SK-N-SH (cell line): ENCODE measurements at regions of chr1 and their contacts with region 1.

Region 1: GRCh38 chr1:1419642-1420384 is 1.3 kb downstream of the ANKRD65 start:
- DNase-seq: peak; percentile 84
- H3K4me3 ChIP-seq: no peak overlapping the region
- H3K27ac ChIP-seq: no peak overlapping the region
- H3K4me1 ChIP-seq: no peaks in the 10 kb centered on the region; a peak in 2 of 4 replicates
- H3K27me3 ChIP-seq: no peaks in the 10 kb centered on the region
- CTCF ChIP-seq: no peak
- EP300 ChIP-seq: no peak
- RAD21 ChIP-seq: no peak

Region 2: GRCh38 chr1:1198791-1199305 is 221.0 kb before region 1 on chr1:
- CTCF ChIA-PET with region 1: no interaction called
- POLR2A ChIA-PET with region 1: no interaction called
- DNase-seq: peak; percentile 46
- H3K4me3 ChIP-seq: no peak overlapping the region
- H3K27ac ChIP-seq: no peak overlapping the region
- H3K4me1 ChIP-seq: peaks cover 0 to under 1% of the 10 kb centered on the region in 2 experiments; a peak in 1 of 4 replicates
- H3K27me3 ChIP-seq: no peaks in the 10 kb centered on the region
- CTCF ChIP-seq: no peak
- EP300 ChIP-seq: no peak
- RAD21 ChIP-seq: no peak

Region 3: GRCh38 chr1:1406817-1407635 is 12.8 kb before region 1 on chr1 and contains the start of gene MRPL20:
- CTCF ChIA-PET with region 1: interaction called, 14 read pairs
- POLR2A ChIA-PET with region 1: interaction called, 4 read pairs
- DNase-seq: peak; percentile 98
- H3K4me3 ChIP-seq: peak within 1 kb of the TSS; percentile 74 to 77
- H3K27ac ChIP-seq: peak within 1 kb of the TSS; percentile 72 to 77
- H3K4me1 ChIP-seq: peaks cover 11 to 15% of the 10 kb centered on the region in 2 experiments; a peak in 3 of 4 replicates
- H3K27me3 ChIP-seq: no peaks in the 10 kb centered on the region
- CTCF ChIP-seq: no peak
- EP300 ChIP-seq: no peak
- RAD21 ChIP-seq: no peak
- polyA plus RNA-seq, gene MRPL20: 159 and 210 TPM in 2 replicates